ENCODE measurements at regions of chr18 and their contacts with region 1.

Region 1: GRCh38 chr18:11937874-11938478 is 29.9 kb upstream of the MPPE1 start:
- DNase-seq: no peak
- H3K4me3 ChIP-seq: no peak overlapping the region
- CTCF ChIP-seq: peak; percentile 70

Region 2: GRCh38 chr18:11908182-11909060 is 29.6 kb before region 1 on chr18 and contains the start of gene MPPE1:
- CTCF ChIA-PET with region 1: interaction called, 12 read pairs
- POLR2A ChIA-PET with region 1: no interaction called
- DNase-seq: peak; percentile 31
- H3K4me3 ChIP-seq: peak within 1 kb of the TSS; percentile 84
- CTCF ChIP-seq: no peak

Region 3: GRCh38 chr18:11925800-11926481 is 12.0 kb before region 1 on chr18:
- CTCF ChIA-PET with region 1: interaction called, 94 read pairs
- POLR2A ChIA-PET with region 1: no interaction called
- DNase-seq: no peak
- H3K4me3 ChIP-seq: no peak overlapping the region
- CTCF ChIP-seq: no peak

Region 4: DNA sequence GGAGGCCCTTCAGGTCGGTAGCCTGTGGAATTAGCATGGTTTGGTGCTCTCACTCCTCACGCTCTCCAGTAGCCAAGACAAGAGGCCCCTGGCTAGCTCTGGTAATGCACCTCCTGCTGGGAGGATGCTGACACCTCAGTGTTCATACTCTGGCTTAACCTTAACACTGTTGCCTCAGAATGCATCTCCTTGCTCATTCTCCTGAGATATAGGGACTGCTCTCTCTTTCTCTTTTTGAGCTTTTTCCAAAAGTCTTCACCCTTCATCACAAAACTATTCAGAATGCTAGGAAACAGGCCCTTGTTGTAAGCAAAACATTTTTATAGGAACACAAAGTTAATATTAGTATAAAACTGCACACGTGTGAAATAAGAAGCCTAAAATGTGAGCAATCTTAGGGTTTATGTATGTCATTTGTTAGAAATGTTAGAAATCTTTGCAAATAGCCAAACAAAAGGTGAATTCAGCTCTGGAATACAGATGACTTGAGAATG is 26.1 kb after region 1 on chr18:
- CTCF ChIA-PET with region 1: interaction called, 12 read pairs
- POLR2A ChIA-PET with region 1: no interaction called
- DNase-seq: no peak
- H3K4me3 ChIP-seq: no peak overlapping the region
- CTCF ChIP-seq: peak; percentile 29

Region 5: GRCh38 chr18:11980555-11981382 is 42.8 kb after region 1 on chr18:
- CTCF ChIA-PET with region 1: interaction called, 809 read pairs
- POLR2A ChIA-PET with region 1: no interaction called
- DNase-seq: peak; percentile 70
- H3K4me3 ChIP-seq: peak overlapping the region; percentile 69
- CTCF ChIP-seq: peak; percentile 15

Region 6: GRCh38 chr18:12031846-12032245 is 93.9 kb after region 1 on chr18:
- CTCF ChIA-PET with region 1: interaction called, 145 read pairs
- POLR2A ChIA-PET with region 1: no interaction called
- DNase-seq: peak; percentile 33
- H3K4me3 ChIP-seq: no peak overlapping the region
- CTCF ChIP-seq: no peak

Region 7: GRCh38 chr18:12038639-12039417 is 100.9 kb after region 1 on chr18:
- CTCF ChIA-PET with region 1: interaction called, 145 read pairs
- POLR2A ChIA-PET with region 1: no interaction called
- DNase-seq: no peak
- H3K4me3 ChIP-seq: peak overlapping the region; percentile 63
- CTCF ChIP-seq: peak; percentile 95